ENCODE measurements at regions of chr14 and their contacts with region 1.

Region 1: DNA sequence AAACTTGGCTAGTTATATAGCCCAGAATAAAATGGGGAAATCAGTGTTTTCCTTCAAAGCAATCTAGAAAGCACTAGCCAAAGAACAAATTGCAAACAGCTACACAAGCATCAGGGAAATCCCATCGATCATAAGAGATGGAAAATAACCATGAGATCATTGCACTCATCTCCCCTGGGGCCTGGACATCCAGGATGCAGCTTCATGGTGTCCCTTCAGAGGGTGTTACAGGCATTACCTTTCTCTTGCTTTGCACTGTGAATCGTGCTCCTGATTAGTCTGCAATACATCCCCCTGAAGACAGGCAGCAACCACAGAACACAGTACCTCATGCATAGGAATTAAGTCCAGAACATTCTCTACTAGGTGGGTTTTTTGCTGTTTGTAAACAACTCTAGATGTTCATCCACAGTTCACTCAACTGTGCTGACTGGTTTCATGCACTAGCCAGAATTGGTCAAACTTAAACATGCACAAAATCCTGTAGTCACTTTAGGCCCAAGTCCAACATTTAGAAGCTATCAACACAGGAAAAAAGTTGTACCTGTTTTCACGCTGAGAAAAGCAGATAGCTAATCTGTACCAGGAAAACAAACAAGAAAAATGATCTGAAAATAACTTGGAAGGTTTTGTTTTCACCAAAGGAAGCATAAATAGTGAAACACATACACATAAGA is 120.1 kb downstream of the ZFP36L1 start:
- DNase-seq: no peak
- H3K4me3 ChIP-seq: no peak overlapping the region
- H3K4me3 Mint-ChIP-seq: no peak overlapping the region
- H3K27ac ChIP-seq: no peak overlapping the region
- H3K27ac Mint-ChIP-seq: peak overlapping the region in 2 of 8 donors; percentile 2 to 38
- H3K4me1 ChIP-seq: no peaks in the 10 kb centered on the region
- H3K4me1 Mint-ChIP-seq: peaks cover 0 to 4% (median 0%) of the 10 kb centered on the region in 3 donors
- H3K27me3 ChIP-seq: no peaks in the 10 kb centered on the region
- H3K27me3 Mint-ChIP-seq: no peaks in the 10 kb centered on the region

Region 2: GRCh38 chr14:68718023-68718995 is 45.6 kb after region 1 on chr14:
- CTCF ChIA-PET with region 1: interaction called, 3 read pairs
- POLR2A ChIA-PET with region 1: interaction called, 10 read pairs
- DNase-seq: peak in 1 of 5 donors; percentile 8
- H3K4me3 ChIP-seq: no peak overlapping the region
- H3K4me3 Mint-ChIP-seq: no peak overlapping the region
- H3K27ac ChIP-seq: no peak overlapping the region
- H3K27ac Mint-ChIP-seq: peak overlapping the region in 2 of 8 donors; percentile 29 to 43
- H3K4me1 ChIP-seq: peaks cover 25% of the 10 kb centered on the region
- H3K4me1 Mint-ChIP-seq: peaks cover 30 to 37% (median 36%) of the 10 kb centered on the region in 3 donors
- H3K27me3 ChIP-seq: no peaks in the 10 kb centered on the region
- H3K27me3 Mint-ChIP-seq: peaks cover 0 to 2% of the 10 kb centered on the region in 2 donors